ENCODE measurements at regions of chr6 and their contacts with region 1.

Region 1: GRCh38 chr6:162032620-162033019 is 694.9 kb downstream of the PRKN start:
- DNase-seq: no peak
- H3K4me3 Mint-ChIP-seq: no peak overlapping the region
- H3K27ac Mint-ChIP-seq: peak overlapping the region; percentile 52
- H3K4me1 Mint-ChIP-seq: peaks cover 18% of the 10 kb centered on the region
- H3K27me3 Mint-ChIP-seq: no peaks in the 10 kb centered on the region

Region 2: DNA sequence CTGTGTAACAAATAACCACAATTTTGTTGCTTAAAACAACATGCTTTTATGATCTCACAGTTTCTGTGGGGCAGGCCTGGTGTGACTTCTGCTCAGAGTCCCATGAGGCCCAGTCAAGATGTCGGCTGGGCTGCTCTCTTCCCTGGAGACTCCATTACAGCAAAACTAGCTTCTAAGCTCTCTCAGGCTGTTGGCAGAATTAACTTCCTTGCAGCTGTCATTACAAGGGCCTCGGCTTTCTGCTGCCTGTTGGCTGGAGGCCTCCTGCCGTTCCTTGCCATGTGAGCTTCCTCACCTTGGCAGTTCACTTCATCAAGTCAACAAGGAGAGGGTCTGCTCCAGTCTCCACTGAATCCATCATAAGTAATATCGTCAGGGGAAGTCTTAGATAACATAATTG is 35.7 kb after region 1 on chr6:
- intact Hi-C with region 1: no loop called
- DNase-seq: peak; percentile 22
- H3K4me3 Mint-ChIP-seq: no peak overlapping the region
- H3K27ac Mint-ChIP-seq: no peak overlapping the region
- H3K4me1 Mint-ChIP-seq: no peaks in the 10 kb centered on the region
- H3K27me3 Mint-ChIP-seq: no peaks in the 10 kb centered on the region

Region 3: GRCh38 chr6:162099685-162100084 is 67.1 kb after region 1 on chr6:
- intact Hi-C with region 1: loop called (anchors 1 kb)
- DNase-seq: no peak
- H3K4me3 Mint-ChIP-seq: no peak overlapping the region
- H3K27ac Mint-ChIP-seq: peak overlapping the region; percentile 3
- H3K4me1 Mint-ChIP-seq: peaks cover 3% of the 10 kb centered on the region
- H3K27me3 Mint-ChIP-seq: no peaks in the 10 kb centered on the region